CD8-positive, alpha-beta T cell (primary cell): ENCODE measurements at regions of chr2 and their contacts with region 1.

Region 1: GRCh38 chr2:221517696-221518151 is 54.4 kb downstream of the EPHA4 start:
- DNase-seq: peak; percentile 61 to 93 (median 77)
- ATAC-seq: peak; percentile 68
- H3K4me3 ChIP-seq: peak overlapping the region in 1 of 2 experiments; percentile 37
- H3K4me3 Mint-ChIP-seq: no peak overlapping the region
- H3K27ac ChIP-seq: peak overlapping the region; percentile 80 to 87
- H3K27ac Mint-ChIP-seq: no peak overlapping the region
- H3K4me1 ChIP-seq: peaks cover 42% of the 10 kb centered on the region
- H3K4me1 Mint-ChIP-seq: no peaks in the 10 kb centered on the region
- H3K27me3 ChIP-seq: no peaks in the 10 kb centered on the region
- H3K27me3 Mint-ChIP-seq: no peaks in the 10 kb centered on the region
- CTCF ChIP-seq: no peak

Region 2: DNA sequence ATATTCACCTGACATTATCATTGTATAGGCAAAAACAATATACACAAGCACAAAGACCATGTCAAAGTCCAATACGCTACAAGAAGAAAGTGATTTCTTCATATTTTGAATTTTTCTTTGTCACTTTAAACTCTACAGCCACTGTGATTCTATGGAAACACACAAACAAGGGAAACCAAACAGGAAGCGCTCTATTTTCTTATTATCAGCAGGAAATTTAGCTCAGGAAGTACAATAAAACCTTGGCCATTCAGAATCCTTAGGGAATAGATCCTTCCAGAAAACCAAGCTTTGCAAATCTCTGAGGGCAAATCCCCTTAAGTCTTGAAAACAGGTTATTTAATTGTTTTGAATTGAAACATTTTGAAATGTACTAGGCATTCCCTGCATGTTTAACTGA is 281.8 kb before region 1 on chr2:
- CTCF ChIA-PET with region 1: no interaction called
- POLR2A ChIA-PET with region 1: no interaction called
- intact Hi-C with region 1: no loop called
- DNase-seq: no peak
- ATAC-seq: no peak
- H3K4me3 ChIP-seq: no peak overlapping the region
- H3K4me3 Mint-ChIP-seq: no peak overlapping the region
- H3K27ac ChIP-seq: no peak overlapping the region
- H3K27ac Mint-ChIP-seq: no peak overlapping the region
- H3K4me1 ChIP-seq: no peaks in the 10 kb centered on the region
- H3K4me1 Mint-ChIP-seq: no peaks in the 10 kb centered on the region
- H3K27me3 ChIP-seq: no peaks in the 10 kb centered on the region
- H3K27me3 Mint-ChIP-seq: peaks cover 4% of the 10 kb centered on the region
- CTCF ChIP-seq: no peak

Region 3: GRCh38 chr2:221254299-221254698 is 263.4 kb before region 1 on chr2:
- CTCF ChIA-PET with region 1: no interaction called
- POLR2A ChIA-PET with region 1: no interaction called
- intact Hi-C with region 1: no loop called
- DNase-seq: no peak
- ATAC-seq: no peak
- H3K4me3 ChIP-seq: no peak overlapping the region
- H3K4me3 Mint-ChIP-seq: no peak overlapping the region
- H3K27ac ChIP-seq: no peak overlapping the region
- H3K27ac Mint-ChIP-seq: no peak overlapping the region
- H3K4me1 ChIP-seq: no peaks in the 10 kb centered on the region
- H3K4me1 Mint-ChIP-seq: no peaks in the 10 kb centered on the region
- H3K27me3 ChIP-seq: no peaks in the 10 kb centered on the region
- H3K27me3 Mint-ChIP-seq: no peaks in the 10 kb centered on the region
- CTCF ChIP-seq: no peak

Region 4: DNA sequence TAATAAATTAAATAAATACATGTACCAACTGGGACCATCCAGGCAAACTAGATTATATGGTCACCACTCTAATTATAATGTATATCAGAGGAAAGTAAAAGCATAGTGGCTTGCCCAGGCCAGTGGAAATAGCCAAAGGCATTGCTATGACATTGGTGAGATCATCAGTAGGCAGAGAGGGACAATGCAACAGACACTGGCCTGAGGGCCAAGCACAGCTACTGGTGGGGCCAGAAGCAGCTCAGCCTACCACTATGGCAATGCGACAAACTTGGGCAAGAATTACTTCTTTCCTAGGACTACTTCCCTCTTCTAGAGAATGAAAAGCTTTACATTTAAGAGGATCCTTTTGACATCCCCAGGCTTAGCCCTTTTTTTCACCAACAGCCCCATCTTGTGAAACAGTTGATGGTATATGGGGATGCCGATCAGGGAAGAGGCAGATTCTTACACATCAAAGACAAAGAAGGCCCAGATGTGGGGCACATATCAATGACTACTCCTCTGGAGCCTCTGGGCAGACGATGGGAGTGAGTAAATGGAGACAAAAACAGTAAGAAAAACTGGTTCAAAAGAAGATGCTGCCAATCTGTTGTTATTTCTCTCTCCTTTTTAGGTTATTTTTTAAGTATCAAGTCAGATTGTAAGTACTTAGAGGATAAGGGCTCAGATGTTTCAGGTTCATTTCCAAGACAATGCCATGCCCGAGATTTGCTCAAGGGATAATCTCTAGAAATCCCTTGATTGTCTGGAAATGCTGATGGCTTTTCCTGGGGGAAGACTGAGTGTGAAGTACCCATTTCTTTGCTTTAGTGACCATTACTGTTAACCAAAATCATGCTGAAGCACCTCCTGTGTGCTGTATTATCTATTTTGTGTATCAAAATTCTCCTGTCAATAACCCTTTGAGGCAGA is 63.3 kb before region 1 on chr2:
- CTCF ChIA-PET with region 1: no interaction called
- POLR2A ChIA-PET with region 1: no interaction called
- intact Hi-C with region 1: loop called in 1 of 2 experiments (anchors 5 kb)
- DNase-seq: no peak
- ATAC-seq: no peak
- H3K4me3 ChIP-seq: no peak overlapping the region
- H3K4me3 Mint-ChIP-seq: no peak overlapping the region
- H3K27ac ChIP-seq: no peak overlapping the region
- H3K27ac Mint-ChIP-seq: no peak overlapping the region
- H3K4me1 ChIP-seq: no peaks in the 10 kb centered on the region
- H3K4me1 Mint-ChIP-seq: no peaks in the 10 kb centered on the region
- H3K27me3 ChIP-seq: peaks cover 0 to 2% of the 10 kb centered on the region in 2 experiments
- H3K27me3 Mint-ChIP-seq: peaks cover 3% of the 10 kb centered on the region
- CTCF ChIP-seq: no peak

Region 5: DNA sequence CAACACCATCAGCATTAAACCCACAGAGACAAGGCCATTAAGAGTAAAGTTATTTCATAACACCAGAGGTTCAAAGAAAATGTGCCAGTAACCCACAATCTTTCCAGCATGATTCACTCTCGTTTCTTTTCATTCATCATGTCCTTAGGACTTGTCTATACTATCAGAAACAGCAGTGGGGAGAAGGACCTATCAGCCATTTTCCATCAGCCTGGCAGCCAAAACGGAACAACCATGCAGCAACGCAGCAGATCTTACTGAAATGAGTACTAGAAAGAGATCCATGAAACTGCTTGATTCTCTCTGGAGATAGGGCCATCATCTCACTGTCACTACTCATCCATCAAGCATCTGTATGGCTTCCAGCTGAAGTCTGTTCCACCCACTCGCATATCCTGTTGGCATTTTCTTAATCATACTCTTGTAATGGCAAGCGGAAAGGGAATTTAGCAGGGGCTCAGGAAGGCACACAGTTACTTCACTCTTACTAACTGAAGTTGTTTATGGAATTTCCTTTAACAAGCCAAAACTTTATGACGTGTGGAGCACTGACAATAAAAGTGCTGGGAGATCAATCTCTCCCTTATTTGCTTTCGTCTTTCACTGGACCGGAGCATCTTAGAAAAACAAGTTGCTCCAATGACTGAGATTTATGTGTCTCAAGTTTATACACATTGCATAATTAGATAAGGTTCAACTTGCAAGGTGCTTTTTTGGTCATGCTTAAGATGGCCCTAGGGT is 15.3 kb before region 1 on chr2:
- CTCF ChIA-PET with region 1: no interaction called
- POLR2A ChIA-PET with region 1: interaction called, 4 read pairs
- intact Hi-C with region 1: loop called in 1 of 2 experiments (anchors 2 kb)
- DNase-seq: no peak
- ATAC-seq: no peak
- H3K4me3 ChIP-seq: no peak overlapping the region
- H3K4me3 Mint-ChIP-seq: no peak overlapping the region
- H3K27ac ChIP-seq: no peak overlapping the region
- H3K27ac Mint-ChIP-seq: no peak overlapping the region
- H3K4me1 ChIP-seq: no peaks in the 10 kb centered on the region
- H3K4me1 Mint-ChIP-seq: peaks cover 13% of the 10 kb centered on the region
- H3K27me3 ChIP-seq: no peaks in the 10 kb centered on the region
- H3K27me3 Mint-ChIP-seq: no peaks in the 10 kb centered on the region
- CTCF ChIP-seq: no peak

Region 6: DNA sequence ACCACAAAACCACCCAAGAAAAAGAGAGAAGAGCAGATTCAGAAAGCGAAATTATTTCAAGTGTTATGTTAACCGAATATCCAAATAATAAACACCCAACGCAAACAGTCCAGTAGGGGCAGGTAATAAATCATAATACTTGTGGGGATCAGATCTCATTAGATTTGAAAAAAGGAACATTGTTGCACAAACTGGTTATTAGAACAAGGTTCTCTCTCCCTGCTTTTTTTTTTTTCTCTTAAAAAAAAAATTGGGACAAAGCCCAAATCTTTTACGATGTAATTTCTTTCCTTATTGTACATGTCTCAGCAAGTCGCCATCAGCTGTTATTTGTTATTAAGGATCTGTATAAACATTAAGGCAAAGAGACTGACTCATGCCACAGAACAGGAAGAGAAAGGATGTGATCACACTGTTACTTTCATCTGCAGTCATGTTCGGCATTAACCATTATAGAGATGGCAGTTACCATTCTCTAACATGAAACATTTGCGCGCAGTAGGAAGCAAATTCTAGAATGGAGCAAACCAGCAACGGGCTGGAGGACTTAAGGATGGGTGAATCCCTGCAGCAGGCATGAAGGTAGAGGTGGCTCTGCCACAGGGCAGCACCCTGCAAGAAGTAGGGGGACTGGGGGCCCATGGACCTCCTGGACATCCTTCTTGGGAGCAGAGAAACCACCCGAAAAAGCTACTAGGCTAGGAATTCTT is 12.4 kb after region 1 on chr2:
- CTCF ChIA-PET with region 1: interaction called, 6 read pairs
- POLR2A ChIA-PET with region 1: interaction called, 7 read pairs
- intact Hi-C with region 1: loop called in 1 of 2 experiments (anchors 1 kb)
- DNase-seq: peak in 2 of 9 experiments; percentile 34 to 50
- ATAC-seq: peak; percentile 54
- H3K4me3 ChIP-seq: peak overlapping the region in 1 of 2 experiments; percentile 19
- H3K4me3 Mint-ChIP-seq: peak overlapping the region; percentile 71
- H3K27ac ChIP-seq: peak overlapping the region in 1 of 2 experiments; percentile 64
- H3K27ac Mint-ChIP-seq: peak overlapping the region; percentile 80
- H3K4me1 ChIP-seq: no peaks in the 10 kb centered on the region
- H3K4me1 Mint-ChIP-seq: peaks cover 35% of the 10 kb centered on the region
- H3K27me3 ChIP-seq: no peaks in the 10 kb centered on the region
- H3K27me3 Mint-ChIP-seq: no peaks in the 10 kb centered on the region
- CTCF ChIP-seq: no peak